ENCODE measurements at regions of chr17 and their contacts with region 1.

Region 1: DNA sequence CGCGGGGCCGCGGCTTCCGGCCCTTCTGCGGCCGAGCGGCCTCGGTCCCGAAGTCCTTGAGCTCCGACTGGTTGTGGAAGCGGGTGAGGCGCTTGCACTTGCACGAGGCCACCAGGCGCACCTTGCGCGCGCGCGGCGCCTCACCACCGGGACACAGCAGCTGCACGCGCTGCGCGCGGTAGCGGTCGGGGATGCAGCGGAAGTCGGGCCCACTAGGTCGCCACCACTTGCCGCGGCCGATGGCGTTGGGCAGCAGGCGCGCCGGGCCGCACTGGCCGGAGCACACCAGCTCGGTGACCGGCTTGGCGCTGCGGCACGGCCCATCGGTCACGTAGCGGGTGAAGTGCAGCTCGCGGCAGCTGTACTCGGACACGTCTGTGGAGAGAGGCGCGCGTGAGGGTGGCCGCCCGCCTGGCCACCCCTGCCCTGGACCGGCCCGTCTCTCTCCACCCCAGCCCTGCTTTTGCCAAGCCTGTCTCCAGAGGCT is 3.2 kb downstream of the SOST start:
- DNase-seq: peak; percentile 74 to 83 (median 81)
- H3K4me3 ChIP-seq: no peak overlapping the region
- H3K27ac ChIP-seq: no peak overlapping the region
- H3K4me1 ChIP-seq: peaks cover 2 to 8% (median 3%) of the 10 kb centered on the region in 3 donors
- H3K27me3 ChIP-seq: no peaks in the 10 kb centered on the region
- CTCF ChIP-seq: no peak

Region 2: GRCh38 chr17:43695970-43696865 is 59.2 kb before region 1 on chr17:
- intact Hi-C with region 1: loop called (anchors 5 kb)
- DNase-seq: no peak
- H3K4me3 ChIP-seq: no peak overlapping the region
- H3K27ac ChIP-seq: peak overlapping the region in 1 of 2 donors; percentile 23
- H3K4me1 ChIP-seq: peaks cover 0 to 3% (median 0%) of the 10 kb centered on the region in 3 donors
- H3K27me3 ChIP-seq: no peaks in the 10 kb centered on the region
- CTCF ChIP-seq: no peak

Region 3: DNA sequence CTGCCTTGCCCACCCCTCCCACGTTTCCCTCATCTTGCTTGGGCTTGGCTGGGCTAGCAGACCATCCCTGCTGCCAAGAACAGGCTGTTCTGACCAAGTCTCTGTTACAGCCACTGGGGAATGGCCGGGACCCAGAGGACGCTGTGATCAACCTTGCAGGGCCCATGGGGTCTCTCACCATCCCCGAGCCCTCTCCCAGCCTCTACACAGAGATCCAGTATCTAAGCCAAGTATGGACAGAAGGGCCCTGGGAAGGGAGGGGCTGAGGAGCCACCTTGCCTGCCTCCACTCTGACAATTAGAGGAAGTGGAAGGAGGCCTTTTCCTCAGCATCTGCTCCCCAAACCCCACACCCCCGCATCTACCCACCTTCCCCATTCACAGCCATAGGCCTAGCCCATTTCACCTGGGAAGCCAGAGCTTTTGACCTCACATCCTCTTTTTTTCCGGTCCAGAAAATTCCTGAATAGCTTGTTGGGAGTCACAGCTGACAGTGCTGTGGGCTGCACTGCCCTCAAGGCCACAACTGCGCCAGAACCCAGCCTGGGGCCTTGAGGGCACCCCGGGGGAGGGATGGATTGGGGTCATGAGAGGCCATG is 105.7 kb after region 1 on chr17:
- intact Hi-C with region 1: no loop called
- DNase-seq: peak in 2 of 5 donors; percentile 27 to 68
- H3K4me3 ChIP-seq: no peak overlapping the region
- H3K27ac ChIP-seq: peak overlapping the region in 1 of 2 donors; percentile 14
- H3K4me1 ChIP-seq: peaks cover 0 to 2% (median 0%) of the 10 kb centered on the region in 3 donors
- H3K27me3 ChIP-seq: no peaks in the 10 kb centered on the region
- CTCF ChIP-seq: no peak

Measured in kidney (tissue), 22 donors.